Heart left ventricle (tissue), 16 donors: ENCODE measurements at regions of chr2 and their contacts with region 1.

Region 1: GRCh38 chr2:102442967-102443828 is 20.2 kb downstream of the IL18RAP start:
- DNase-seq: no peak
- ATAC-seq: peak in 2 of 4 donors; percentile 36 to 49
- H3K4me3 ChIP-seq: no peak overlapping the region
- H3K27ac ChIP-seq: peak overlapping the region in 1 of 12 donors; percentile 18
- H3K4me1 ChIP-seq: peaks cover 0 to 15% (median 0%) of the 10 kb centered on the region in 12 donors
- H3K27me3 ChIP-seq: no peaks in the 10 kb centered on the region
- CTCF ChIP-seq: peak; percentile 49 to 79 (median 62)
- POLR2A ChIP-seq: no peak

Region 2: GRCh38 chr2:101341901-101342624 is 1101.1 kb before region 1 on chr2:
- intact Hi-C with region 1: loop called in 1 of 10 experiments (anchors 10 kb)
- DNase-seq: peak; percentile 68 to 84 (median 79)
- ATAC-seq: peak; percentile 66 to 79 (median 72)
- H3K4me3 ChIP-seq: no peak overlapping the region
- H3K27ac ChIP-seq: no peak overlapping the region
- H3K4me1 ChIP-seq: peaks cover 0 to 25% (median 0%) of the 10 kb centered on the region in 12 donors
- H3K27me3 ChIP-seq: no peaks in the 10 kb centered on the region
- CTCF ChIP-seq: peak; percentile 74 to 88 (median 82)
- POLR2A ChIP-seq: no peak

Region 3: GRCh38 chr2:101883863-101884262 is 559.3 kb before region 1 on chr2:
- intact Hi-C with region 1: loop called in 2 of 10 experiments (anchors 10 kb)
- DNase-seq: no peak
- ATAC-seq: peak in 3 of 4 donors; percentile 65 to 79 (median 77)
- H3K4me3 ChIP-seq: no peak overlapping the region
- H3K27ac ChIP-seq: peak overlapping the region in 1 of 12 donors; percentile 25
- H3K4me1 ChIP-seq: peaks cover 0 to 35% (median 17%) of the 10 kb centered on the region in 12 donors
- H3K27me3 ChIP-seq: no peaks in the 10 kb centered on the region
- CTCF ChIP-seq: peak; percentile 33 to 68 (median 54)
- POLR2A ChIP-seq: no peak

Region 4: GRCh38 chr2:102240640-102241370 is 202.4 kb before region 1 on chr2:
- intact Hi-C with region 1: loop called in 2 of 10 experiments (anchors 5 to 10 kb)
- DNase-seq: peak; percentile 91 to 95 (median 92)
- ATAC-seq: peak; percentile 89 to 96 (median 94)
- H3K4me3 ChIP-seq: peak overlapping the region in 6 of 12 donors; percentile 5 to 33 (median 16)
- H3K27ac ChIP-seq: peak overlapping the region; percentile 58 to 88 (median 79)
- H3K4me1 ChIP-seq: peaks cover 0 to 29% (median 11%) of the 10 kb centered on the region in 12 donors
- H3K27me3 ChIP-seq: peaks cover 0 to 2% (median 0%) of the 10 kb centered on the region in 9 donors
- CTCF ChIP-seq: peak; percentile 97 to 100 (median 99)
- POLR2A ChIP-seq: peak in 1 of 2 donors; percentile 23

Region 5: GRCh38 chr2:102361632-102362241 is 81.5 kb before region 1 on chr2:
- intact Hi-C with region 1: loop called in 2 of 10 experiments (anchors 5 kb)
- DNase-seq: no peak
- ATAC-seq: no peak
- H3K4me3 ChIP-seq: no peak overlapping the region
- H3K27ac ChIP-seq: no peak overlapping the region
- H3K4me1 ChIP-seq: peaks cover 0 to 12% (median 0%) of the 10 kb centered on the region in 12 donors
- H3K27me3 ChIP-seq: no peaks in the 10 kb centered on the region
- CTCF ChIP-seq: no peak
- POLR2A ChIP-seq: no peak